Left cardiac atrium (tissue), 4 donors: ENCODE measurements at regions of chr1 and their contacts with region 1.

Region 1: GRCh38 chr1:165630629-165631341 is at the start of gene MGST3:
- DNase-seq: peak; percentile 98
- ATAC-seq: peak; percentile 98
- total RNA-seq, gene MGST3: 436 to 446 TPM

Region 2: GRCh38 chr1:164950541-164950986 is 680.2 kb before region 1 on chr1:
- intact Hi-C with region 1: no loop called
- DNase-seq: no peak
- ATAC-seq: peak; percentile 15 to 75

Region 3: DNA sequence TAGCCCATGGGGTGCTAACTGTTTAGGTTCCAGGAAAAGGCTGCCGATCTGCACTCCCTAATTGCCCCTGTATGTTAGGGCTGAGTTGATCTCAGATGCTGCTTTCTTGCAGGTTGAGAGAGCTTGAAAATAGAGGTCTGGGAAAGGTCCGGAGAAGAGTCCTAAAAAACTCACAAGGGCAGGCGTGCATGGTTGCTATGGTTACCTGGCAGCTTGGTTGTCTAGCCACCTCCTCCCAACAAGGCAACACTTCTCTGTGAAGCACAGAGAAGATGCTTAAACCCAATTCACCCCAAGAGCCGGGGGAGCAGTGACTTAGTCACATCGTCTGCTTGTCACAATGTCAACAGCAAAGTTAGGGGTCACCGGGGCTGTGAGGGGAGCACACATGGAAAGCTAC is 118.0 kb before region 1 on chr1:
- intact Hi-C with region 1: no loop called
- DNase-seq: no peak
- ATAC-seq: no peak

Region 4: GRCh38 chr1:165659581-165659895 is 28.8 kb after region 1 on chr1:
- intact Hi-C with region 1: no loop called
- DNase-seq: no peak
- ATAC-seq: no peak

Region 5: DNA sequence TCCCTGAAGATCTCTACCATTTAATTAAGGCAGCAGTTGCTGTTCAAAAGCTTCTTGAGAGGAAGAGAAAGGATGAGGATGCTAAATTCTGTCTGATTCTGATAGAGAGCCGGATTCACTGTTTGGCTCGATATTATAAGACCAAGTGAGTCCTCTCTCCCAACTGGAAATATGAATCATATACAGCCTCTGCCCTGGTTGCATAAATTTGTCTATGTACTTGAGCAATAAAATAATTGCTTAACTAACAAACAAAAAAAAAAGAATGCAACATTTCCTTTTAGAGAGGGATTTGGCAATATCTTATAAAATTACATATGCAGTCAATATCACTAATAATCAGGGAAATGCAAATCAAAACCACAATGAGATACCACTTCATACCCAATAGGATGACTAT is 40.7 kb after region 1 on chr1:
- intact Hi-C with region 1: loop called in 1 of 2 experiments (anchors 2 kb)
- DNase-seq: no peak
- ATAC-seq: no peak

Region 6: DNA sequence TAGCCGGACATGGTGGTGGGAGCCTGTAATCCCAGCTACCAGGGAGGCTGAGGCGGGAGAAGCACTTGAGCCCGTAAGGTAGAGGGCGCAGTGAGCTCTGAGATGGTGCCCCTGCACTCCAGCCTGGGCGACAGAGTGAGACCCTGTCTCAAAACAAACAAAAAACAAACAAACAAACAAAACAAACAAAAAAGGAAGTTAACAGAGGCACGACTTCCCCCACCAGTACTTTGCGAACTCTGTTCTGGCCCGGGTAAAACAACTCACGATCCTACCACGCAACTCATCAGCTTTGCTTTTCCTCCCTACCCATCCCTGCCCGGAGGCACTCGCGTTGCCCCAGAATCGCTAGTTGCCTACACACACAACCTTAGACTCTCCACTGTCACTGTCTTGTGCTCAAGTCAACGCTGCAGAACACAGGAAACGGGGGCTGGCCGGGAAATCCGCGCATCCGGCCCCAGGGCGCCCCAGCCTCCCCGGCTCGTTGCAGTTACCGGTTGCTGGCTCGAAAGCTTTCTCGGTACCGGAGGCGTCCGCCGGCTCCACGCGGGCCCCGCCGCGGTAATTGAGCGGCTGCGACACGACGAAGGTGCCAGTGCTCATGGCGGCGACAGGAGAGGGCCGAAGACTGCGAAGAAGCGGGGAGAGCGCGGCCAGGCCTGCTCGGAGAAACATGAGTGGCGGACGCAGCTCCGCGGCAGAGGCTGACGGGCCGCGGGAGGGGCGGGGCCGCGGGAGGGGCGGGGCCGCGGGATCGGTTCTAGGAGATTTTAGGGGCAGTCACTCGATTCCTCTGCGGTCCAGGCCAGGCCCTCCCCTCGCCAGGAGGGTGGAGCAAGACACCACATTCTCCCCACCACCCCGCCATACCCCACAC is 67.3 kb after region 1 on chr1 and contains the start of gene ALDH9A1:
- intact Hi-C with region 1: loop called in 1 of 2 experiments (anchors 5 kb)
- DNase-seq: peak; percentile 91
- ATAC-seq: peak; percentile 97
- total RNA-seq, gene ALDH9A1: 63.2 to 71.7 TPM